OCI-LY7 (cell line): ENCODE measurements at regions of chr10 and their contacts with region 1.

Region 1: GRCh38 chr10:511101-511848 is 178.2 kb downstream of the DIP2C start:
- DNase-seq: peak; percentile 91
- H3K4me3 ChIP-seq: peak overlapping the region; percentile 69
- H3K27ac ChIP-seq: peak overlapping the region; percentile 100
- H3K4me1 ChIP-seq: peaks cover 63% of the 10 kb centered on the region
- CTCF ChIP-seq: peak; percentile 98

Region 2: GRCh38 chr10:306675-307185 is 204.5 kb before region 1 on chr10:
- CTCF ChIA-PET with region 1: no interaction called
- POLR2A ChIA-PET with region 1: interaction called, 3 read pairs
- intact Hi-C with region 1: loop called (anchors 2 kb)
- DNase-seq: peak; percentile 91
- H3K4me3 ChIP-seq: peak overlapping the region; percentile 58
- H3K27ac ChIP-seq: peak overlapping the region; percentile 96
- H3K4me1 ChIP-seq: peaks cover 94% of the 10 kb centered on the region
- CTCF ChIP-seq: no peak

Region 3: DNA sequence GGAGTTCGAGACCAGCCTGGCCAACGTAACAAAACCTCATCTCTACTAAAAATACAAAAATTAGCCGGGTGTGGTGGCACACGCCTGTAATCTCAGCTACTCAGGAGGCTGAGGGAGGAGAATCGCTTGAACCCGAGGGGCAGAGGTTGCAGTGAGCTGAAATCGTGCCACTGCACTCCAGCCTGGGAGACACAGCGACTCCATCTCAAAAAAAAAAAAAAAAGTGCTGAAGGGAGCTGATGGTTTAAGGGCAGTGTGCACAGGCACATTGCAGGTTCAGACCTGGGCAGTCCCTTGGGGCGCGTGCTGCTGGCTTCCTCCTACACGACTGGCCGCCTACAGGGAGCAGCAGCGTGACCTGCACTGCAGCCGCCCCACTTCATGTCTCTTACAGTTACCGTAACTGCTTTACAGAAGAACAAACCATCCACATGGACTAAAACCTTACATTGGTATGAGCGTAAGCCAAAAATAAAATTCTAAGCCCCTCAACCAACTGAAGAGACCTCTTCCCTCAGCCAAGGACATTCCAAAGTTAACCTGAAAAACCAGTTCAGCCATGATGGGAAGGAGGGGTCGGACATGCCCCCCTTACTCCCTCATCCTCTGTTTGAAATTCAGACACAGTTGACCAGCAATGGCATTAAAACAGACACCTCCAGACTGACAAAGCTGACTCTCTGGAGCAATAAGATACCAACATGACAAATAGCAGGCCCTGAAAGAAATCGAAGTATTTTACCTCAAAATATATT is 113.8 kb before region 1 on chr10:
- CTCF ChIA-PET with region 1: no interaction called
- POLR2A ChIA-PET with region 1: no interaction called
- intact Hi-C with region 1: no loop called
- DNase-seq: no peak
- H3K4me3 ChIP-seq: no peak overlapping the region
- H3K27ac ChIP-seq: no peak overlapping the region
- H3K4me1 ChIP-seq: peaks cover 14% of the 10 kb centered on the region
- CTCF ChIP-seq: no peak

Region 4: GRCh38 chr10:526651-527311 is 15.5 kb after region 1 on chr10:
- CTCF ChIA-PET with region 1: interaction called, 13 read pairs
- POLR2A ChIA-PET with region 1: interaction called, 136 read pairs
- intact Hi-C with region 1: loop called (anchors 1 kb)
- DNase-seq: peak; percentile 87
- H3K4me3 ChIP-seq: peak overlapping the region; percentile 24
- H3K27ac ChIP-seq: peak overlapping the region; percentile 49
- H3K4me1 ChIP-seq: peaks cover 59% of the 10 kb centered on the region
- CTCF ChIP-seq: peak; percentile 88

Region 5: DNA sequence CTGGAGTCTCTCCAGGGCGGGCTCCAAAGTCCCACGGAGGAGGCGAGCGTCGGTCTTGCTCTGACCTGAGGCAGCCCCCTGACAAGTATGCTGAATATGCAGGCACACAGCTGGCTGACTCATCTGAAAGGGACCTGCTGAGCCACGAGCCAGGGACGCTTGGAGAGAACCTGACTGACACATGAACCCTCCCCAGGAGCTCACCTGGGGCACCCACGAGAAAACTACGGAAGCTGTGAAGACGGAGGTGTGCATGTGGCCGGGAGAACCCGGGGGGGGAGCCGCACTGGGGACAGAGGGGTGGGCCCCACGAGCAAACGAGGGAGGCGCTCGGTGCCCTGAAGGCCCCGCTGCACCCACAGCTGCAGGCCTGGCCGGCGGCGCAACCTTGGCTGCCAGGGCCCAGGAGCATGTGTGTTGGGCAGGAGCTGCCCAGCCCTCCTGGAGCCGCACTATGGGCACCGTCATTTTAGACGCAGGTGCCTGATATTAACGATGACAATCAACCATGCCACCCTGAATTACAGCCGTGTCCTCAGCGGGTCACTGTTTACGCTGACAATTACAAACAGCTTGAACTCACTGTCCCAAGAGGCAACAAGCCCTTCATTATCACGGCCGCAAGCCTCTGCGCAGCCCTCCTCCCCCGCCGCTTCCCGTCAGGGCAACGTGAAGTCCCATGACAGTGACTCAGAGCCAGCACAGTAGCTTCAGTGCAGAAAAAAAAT is 113.5 kb after region 1 on chr10:
- CTCF ChIA-PET with region 1: no interaction called
- POLR2A ChIA-PET with region 1: no interaction called
- intact Hi-C with region 1: loop called (anchors 5 kb)
- DNase-seq: no peak
- H3K4me3 ChIP-seq: no peak overlapping the region
- H3K27ac ChIP-seq: no peak overlapping the region
- H3K4me1 ChIP-seq: peaks cover 17% of the 10 kb centered on the region
- CTCF ChIP-seq: no peak

Region 6: GRCh38 chr10:931416-932318 is 420.4 kb after region 1 on chr10 and contains the start of gene LARP4B:
- CTCF ChIA-PET with region 1: no interaction called
- POLR2A ChIA-PET with region 1: interaction called, 3 read pairs
- intact Hi-C with region 1: loop called (anchors 2 kb)
- DNase-seq: peak; percentile 98
- H3K4me3 ChIP-seq: peak within 1 kb of the TSS; percentile 78
- H3K27ac ChIP-seq: peak within 1 kb of the TSS; percentile 75
- H3K4me1 ChIP-seq: peaks cover 47% of the 10 kb centered on the region
- CTCF ChIP-seq: no peak
- total RNA-seq, gene LARP4B: 64.8 and 68.3 TPM in 2 replicates